Mammary epithelial cell (primary cell): ENCODE measurements at regions of chr17 and their contacts with region 1.

Region 1: GRCh38 chr17:78112518-78113226 is 15.9 kb downstream of the TMC6 start:
- DNase-seq: peak; percentile 38
- H3K4me3 ChIP-seq: no peak overlapping the region
- H3K27ac ChIP-seq: no peak overlapping the region
- H3K4me1 ChIP-seq: no peaks in the 10 kb centered on the region
- H3K27me3 ChIP-seq: no peaks in the 10 kb centered on the region
- CTCF ChIP-seq: peak; percentile 91 to 99

Region 2: GRCh38 chr17:77909236-77909635 is 203.4 kb before region 1 on chr17:
- CTCF ChIA-PET with region 1: no interaction called
- dilution Hi-C with region 1: no loop called
- in situ Hi-C with region 1: no loop called
- intact Hi-C with region 1: no loop called
- DNase-seq: no peak
- H3K4me3 ChIP-seq: no peak overlapping the region
- H3K27ac ChIP-seq: no peak overlapping the region
- H3K4me1 ChIP-seq: peaks cover 3% of the 10 kb centered on the region
- H3K27me3 ChIP-seq: peaks cover 6% of the 10 kb centered on the region
- CTCF ChIP-seq: no peak

Region 3: GRCh38 chr17:78034429-78035091 is 78.1 kb before region 1 on chr17:
- CTCF ChIA-PET with region 1: no interaction called
- dilution Hi-C with region 1: loop called (anchors 5 kb)
- in situ Hi-C with region 1: no loop called
- intact Hi-C with region 1: no loop called
- DNase-seq: peak; percentile 57
- H3K4me3 ChIP-seq: no peak overlapping the region
- H3K27ac ChIP-seq: peak overlapping the region; percentile 38
- H3K4me1 ChIP-seq: peaks cover 24% of the 10 kb centered on the region
- H3K27me3 ChIP-seq: no peaks in the 10 kb centered on the region
- CTCF ChIP-seq: no peak

Region 4: DNA sequence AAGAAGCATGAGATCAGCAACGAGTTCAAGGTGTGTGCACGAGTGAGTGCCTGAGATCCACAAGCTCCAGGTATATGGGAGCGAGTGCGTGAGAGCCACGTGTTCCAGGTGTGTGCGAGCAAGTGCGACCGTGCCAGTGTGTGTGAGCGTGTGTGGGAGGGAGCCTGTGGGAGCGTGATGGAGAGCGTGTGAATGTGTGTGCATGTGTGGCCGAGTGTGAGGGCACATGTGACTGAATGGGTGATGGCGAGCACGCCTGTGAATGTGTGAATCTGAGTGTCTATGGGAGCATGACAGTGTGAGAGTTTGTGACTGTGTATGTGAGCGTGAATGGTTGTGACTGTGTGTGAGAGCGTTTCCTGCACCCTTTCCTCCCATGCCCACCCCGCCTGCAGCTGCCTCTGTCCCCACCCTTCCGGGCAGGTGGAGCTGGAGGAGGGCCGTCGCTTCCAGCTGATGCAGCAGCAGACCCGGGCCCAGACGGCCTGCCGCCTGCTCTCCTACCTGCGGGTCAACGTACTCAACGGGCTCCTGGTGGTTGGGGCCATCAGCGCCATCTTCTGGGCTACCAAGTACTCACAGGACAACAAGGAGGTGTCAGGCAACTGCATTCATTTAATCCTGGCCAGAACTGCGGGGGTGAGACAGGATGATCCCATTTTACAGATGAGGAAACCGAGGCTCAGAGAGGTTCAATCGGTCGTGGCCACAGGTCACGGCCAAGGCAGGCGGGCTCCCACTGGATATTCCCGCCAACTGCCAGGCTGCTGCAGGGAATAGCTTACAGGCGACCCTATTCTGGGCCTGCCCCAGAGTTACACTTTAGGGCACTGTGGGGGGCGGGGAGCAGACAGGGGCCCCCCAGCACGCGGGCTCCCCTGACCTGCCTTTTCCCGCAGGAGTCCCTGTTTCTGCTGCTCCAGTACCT is 21.6 kb after region 1 on chr17:
- CTCF ChIA-PET with region 1: no interaction called
- dilution Hi-C with region 1: no loop called
- in situ Hi-C with region 1: no loop called
- intact Hi-C with region 1: no loop called
- DNase-seq: no peak
- H3K4me3 ChIP-seq: no peak overlapping the region
- H3K27ac ChIP-seq: no peak overlapping the region
- H3K4me1 ChIP-seq: peaks cover 5% of the 10 kb centered on the region
- H3K27me3 ChIP-seq: no peaks in the 10 kb centered on the region
- CTCF ChIP-seq: peak; percentile 36 to 51

Region 5: GRCh38 chr17:78154903-78155811 is 42.5 kb after region 1 on chr17:
- CTCF ChIA-PET with region 1: no interaction called
- dilution Hi-C with region 1: no loop called
- in situ Hi-C with region 1: no loop called
- intact Hi-C with region 1: no loop called
- DNase-seq: peak; percentile 78
- H3K4me3 ChIP-seq: no peak overlapping the region
- H3K27ac ChIP-seq: no peak overlapping the region
- H3K4me1 ChIP-seq: peaks cover 12% of the 10 kb centered on the region
- H3K27me3 ChIP-seq: no peaks in the 10 kb centered on the region
- CTCF ChIP-seq: no peak

Region 6: DNA sequence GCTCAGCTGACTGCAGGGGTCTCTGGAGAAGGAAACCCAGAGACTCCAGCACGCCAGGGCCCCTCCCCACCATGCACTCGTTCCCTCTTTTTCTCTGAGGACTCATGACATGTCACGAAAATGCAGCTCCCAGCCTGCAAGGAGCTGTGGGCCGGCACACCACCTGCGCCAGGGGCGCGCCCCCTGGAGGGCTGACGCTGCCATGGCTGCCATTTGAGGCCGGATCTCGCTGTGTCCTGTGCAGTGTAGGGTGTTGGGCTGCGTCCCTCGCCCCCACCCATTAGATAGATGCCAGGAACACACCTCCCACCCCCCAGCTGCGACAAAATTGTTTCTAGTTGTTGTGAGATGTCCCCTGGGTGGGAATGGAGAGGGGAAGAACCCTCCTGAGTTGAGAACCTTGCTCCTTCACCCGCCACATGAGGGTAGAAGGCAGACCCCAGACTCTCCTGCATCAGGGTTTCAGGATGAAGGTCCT is 63.9 kb after region 1 on chr17:
- CTCF ChIA-PET with region 1: interaction called, 5 read pairs
- dilution Hi-C with region 1: loop called (anchors 5 kb)
- in situ Hi-C with region 1: loop called in 1 of 2 experiments (anchors 5 kb)
- intact Hi-C with region 1: loop called (anchors 1 kb)
- DNase-seq: peak; percentile 26
- H3K4me3 ChIP-seq: no peak overlapping the region
- H3K27ac ChIP-seq: no peak overlapping the region
- H3K4me1 ChIP-seq: peaks cover 4% of the 10 kb centered on the region
- H3K27me3 ChIP-seq: no peaks in the 10 kb centered on the region
- CTCF ChIP-seq: peak; percentile 86 to 98

Region 7: DNA sequence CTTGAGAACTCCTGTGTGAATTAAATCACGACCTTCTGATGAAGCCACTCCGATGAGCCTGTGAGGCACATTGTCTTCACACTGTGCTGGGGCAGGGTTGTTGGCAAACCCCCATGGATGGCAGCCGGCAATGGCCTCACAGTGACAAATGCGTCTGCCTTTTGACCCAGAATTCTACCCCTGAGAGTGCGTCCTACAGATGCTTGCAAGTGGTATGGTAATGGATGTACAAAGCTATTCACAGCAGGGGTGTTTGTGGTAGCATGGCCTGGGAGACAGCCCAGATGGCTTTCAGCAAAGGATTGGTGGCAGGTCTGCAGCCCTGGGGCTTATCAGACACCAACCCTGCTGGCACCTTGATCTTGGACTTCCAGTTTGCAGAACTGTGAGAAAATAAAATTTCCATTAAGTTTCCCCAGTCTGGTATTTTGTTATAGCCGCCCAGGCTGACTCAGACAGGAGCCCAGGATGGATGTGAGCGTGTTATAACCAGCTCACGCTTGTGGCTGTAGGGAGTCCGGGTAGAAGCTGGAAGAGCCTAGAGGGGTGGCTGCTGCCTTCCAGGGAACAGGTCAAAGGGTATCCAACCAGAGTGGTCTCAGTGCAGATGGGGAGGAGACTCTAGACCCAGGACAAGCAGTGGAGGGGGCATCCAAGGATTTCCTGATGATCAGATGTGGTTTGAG is 84.6 kb after region 1 on chr17:
- CTCF ChIA-PET with region 1: no interaction called
- dilution Hi-C with region 1: loop called (anchors 5 kb)
- in situ Hi-C with region 1: no loop called
- intact Hi-C with region 1: no loop called
- DNase-seq: peak; percentile 12
- H3K4me3 ChIP-seq: no peak overlapping the region
- H3K27ac ChIP-seq: peak overlapping the region; percentile 1
- H3K4me1 ChIP-seq: peaks cover 7% of the 10 kb centered on the region
- H3K27me3 ChIP-seq: no peaks in the 10 kb centered on the region
- CTCF ChIP-seq: no peak

Region 8: DNA sequence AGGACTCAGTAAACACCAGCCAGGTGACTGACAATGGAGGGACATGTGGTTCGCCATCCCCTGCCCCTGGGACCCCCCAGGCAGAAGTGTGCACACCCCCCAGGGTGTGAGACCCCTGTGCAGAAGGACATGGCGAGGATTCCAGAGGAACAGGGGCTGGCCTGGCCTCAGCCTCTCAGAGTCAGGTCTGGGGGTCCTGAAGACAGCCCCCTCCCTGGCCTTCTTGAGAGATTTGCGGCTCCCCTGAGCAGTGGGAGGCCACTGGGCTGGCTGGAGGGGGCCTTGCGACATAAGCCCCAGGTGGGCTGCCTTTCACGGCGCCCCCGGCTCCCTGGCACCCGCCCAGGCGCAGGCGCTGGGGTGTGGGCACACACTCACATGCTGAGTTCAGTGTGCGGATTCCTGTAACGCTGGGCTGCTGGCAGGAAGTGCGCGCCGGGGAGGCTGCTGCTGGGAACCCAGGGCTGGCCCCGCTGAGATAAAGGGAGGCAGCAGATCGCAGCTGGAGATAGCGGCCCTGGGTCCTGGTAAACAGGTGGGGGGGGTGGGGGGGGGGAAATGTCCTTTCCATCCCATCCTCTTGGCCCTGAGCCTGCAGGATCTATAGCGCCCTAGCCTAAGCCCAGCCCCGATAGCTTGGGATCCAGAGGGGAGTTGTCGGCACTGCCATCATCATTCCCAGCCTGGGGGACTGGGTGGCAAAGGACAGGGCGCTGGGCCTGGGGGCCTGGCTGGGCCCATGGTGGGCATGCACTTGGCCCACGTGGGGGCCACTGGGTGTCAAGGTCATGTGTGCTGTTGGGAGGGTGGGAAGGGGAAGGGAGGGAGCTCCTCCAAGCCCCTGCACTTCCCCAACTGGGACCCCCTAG is 145.9 kb after region 1 on chr17:
- CTCF ChIA-PET with region 1: no interaction called
- dilution Hi-C with region 1: loop called (anchors 5 kb)
- in situ Hi-C with region 1: loop called in 1 of 2 experiments (anchors 25 kb)
- intact Hi-C with region 1: no loop called
- DNase-seq: no peak
- H3K4me3 ChIP-seq: no peak overlapping the region
- H3K27ac ChIP-seq: no peak overlapping the region
- H3K4me1 ChIP-seq: no peaks in the 10 kb centered on the region
- H3K27me3 ChIP-seq: no peaks in the 10 kb centered on the region
- CTCF ChIP-seq: no peak